ENCODE measurements at regions of chr14 and their contacts with region 1.

Region 1: DNA sequence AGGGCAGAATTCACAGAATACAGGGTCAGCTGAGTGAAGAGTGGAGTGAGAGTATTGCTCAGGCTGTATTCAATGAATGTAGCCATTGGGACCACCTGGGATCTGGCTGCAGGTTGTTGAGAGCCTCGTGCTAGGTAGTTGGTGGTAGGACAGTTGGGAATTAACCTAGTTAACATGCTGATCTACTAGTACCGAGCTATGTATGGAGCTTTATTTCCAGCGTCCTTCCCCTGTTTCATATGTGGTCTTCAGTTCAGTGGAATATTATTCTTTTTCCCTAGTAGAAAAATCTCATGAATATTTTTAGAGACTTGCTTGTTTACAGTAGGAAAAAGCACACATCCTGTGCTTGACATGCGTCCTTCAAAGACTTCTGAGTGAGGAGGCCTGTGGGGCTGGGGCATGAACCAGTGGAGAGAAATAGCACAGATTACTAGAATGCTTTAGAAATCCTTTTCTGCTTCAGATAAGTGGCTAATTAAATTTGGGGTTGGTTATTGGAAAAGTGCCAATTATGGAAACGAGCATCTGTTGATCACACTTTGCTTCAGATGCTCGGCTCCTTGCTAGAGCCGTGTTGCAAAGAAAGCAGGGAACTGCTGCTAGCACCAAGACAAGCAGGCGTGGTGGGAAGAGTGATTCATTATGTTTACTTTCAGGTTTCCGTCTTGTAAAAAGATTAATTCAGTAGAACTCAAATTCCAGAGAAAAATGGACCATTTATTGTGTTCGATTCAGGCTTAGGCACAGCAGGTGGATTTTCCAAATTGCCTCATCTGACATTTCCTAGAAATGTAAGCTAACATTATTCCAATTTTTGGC is 53.6 kb downstream of the ARF6 start:
- DNase-seq: peak; percentile 86
- H3K4me3 ChIP-seq: peak overlapping the region in 1 of 3 experiments; percentile 43
- H3K27ac ChIP-seq: peak overlapping the region; percentile 44
- H3K4me1 ChIP-seq: peaks cover 26% of the 10 kb centered on the region
- H3K27me3 ChIP-seq: no peaks in the 10 kb centered on the region
- CTCF ChIP-seq: no peak
- POLR2A ChIP-seq: no peak

Region 2: GRCh38 chr14:49886523-49886922 is 60.0 kb before region 1 on chr14:
- CTCF ChIA-PET with region 1: no interaction called
- POLR2A ChIA-PET with region 1: no interaction called
- dilution Hi-C with region 1: no loop called
- intact Hi-C with region 1: no loop called
- DNase-seq: no peak
- H3K4me3 ChIP-seq: no peak overlapping the region
- H3K27ac ChIP-seq: no peak overlapping the region
- H3K4me1 ChIP-seq: no peaks in the 10 kb centered on the region
- H3K27me3 ChIP-seq: no peaks in the 10 kb centered on the region
- CTCF ChIP-seq: no peak
- POLR2A ChIP-seq: no peak

Region 3: DNA sequence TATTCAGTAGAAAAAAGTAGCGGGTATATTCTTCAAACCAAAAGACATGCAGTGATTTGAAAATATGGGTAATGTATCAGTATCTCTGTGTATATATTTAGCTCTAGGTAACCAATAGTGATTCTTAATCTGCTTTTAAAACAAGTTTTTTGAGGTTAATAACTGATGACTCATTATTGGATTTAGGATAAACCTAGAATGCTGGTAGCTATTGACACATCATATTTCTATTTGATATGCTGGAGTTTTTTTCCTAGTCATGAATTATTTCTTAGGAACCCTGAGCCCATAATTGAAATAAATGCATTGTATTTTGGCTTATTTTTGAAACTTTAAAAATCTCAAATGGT is 38.1 kb before region 1 on chr14:
- CTCF ChIA-PET with region 1: interaction called, 4 read pairs
- POLR2A ChIA-PET with region 1: no interaction called
- dilution Hi-C with region 1: no loop called
- intact Hi-C with region 1: loop called (anchors 1 kb)
- DNase-seq: no peak
- H3K4me3 ChIP-seq: no peak overlapping the region
- H3K27ac ChIP-seq: peak overlapping the region; percentile 96
- H3K4me1 ChIP-seq: peaks cover 36% of the 10 kb centered on the region
- H3K27me3 ChIP-seq: no peaks in the 10 kb centered on the region
- CTCF ChIP-seq: no peak
- POLR2A ChIP-seq: no peak

Measured in endothelial cell of umbilical vein (primary cell).